PC-9 (cell line): ENCODE measurements at regions of chr6 and their contacts with region 1.

Region 1: GRCh38 chr6:31958741-31959739 is at the starts of genes NELFE and SKIC2:
- DNase-seq: peak; percentile 94 to 98
- H3K4me3 ChIP-seq: peak within 1 kb of the TSS; percentile 95
- H3K27ac ChIP-seq: 0 out of 2 replicates have a peak within 1 kb of the TSS, but pooled peaks have one; percentile 40
- H3K4me1 ChIP-seq: peaks cover 12% of the 10 kb centered on the region
- H3K27me3 ChIP-seq: no peaks in the 10 kb centered on the region
- CTCF ChIP-seq: no peak
- total RNA-seq, gene NELFE: 43.0 and 50.8 TPM in 2 replicates
- total RNA-seq, gene SKIC2: 67.9 and 86.0 TPM in 2 replicates

Region 2: DNA sequence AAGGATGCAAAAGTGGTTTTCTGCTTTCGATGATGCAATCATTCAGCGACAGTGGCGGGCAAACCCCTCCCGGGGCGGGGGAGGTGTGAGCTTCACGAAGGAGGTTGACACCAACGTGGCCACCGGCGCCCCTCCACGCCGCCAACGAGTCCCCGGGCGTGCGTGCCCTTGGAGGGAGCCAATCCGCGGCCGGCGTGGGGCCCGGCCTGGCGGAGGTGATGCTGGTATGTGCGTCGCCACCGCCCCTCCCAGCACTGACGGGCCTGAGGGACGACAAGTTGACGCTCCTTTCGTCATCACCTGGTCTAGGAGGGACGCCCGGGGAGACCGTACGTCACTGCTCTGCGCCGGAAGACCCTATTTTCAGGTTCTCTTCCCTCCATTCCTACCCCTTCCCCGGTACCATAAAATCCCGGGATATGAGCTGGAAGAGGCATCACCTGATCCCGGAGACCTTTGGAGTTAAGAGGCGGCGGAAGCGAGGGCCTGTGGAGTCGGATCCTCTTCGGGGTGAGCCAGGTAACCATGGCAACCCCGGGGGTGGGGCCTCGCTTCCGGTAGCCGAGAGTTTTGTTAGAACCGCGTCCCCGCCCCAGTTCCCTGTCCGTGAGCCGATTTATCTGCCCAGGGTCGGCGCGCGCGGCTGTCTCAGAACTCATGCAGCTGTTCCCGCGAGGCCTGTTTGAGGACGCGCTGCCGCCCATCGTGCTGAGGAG is 13.1 kb after region 1 on chr6 and contains the start of gene DXO:
- CTCF ChIA-PET with region 1: no interaction called
- POLR2A ChIA-PET with region 1: no interaction called
- intact Hi-C with region 1: loop called (anchors 1 kb)
- DNase-seq: peak; percentile 90 to 95
- H3K4me3 ChIP-seq: peak within 1 kb of the TSS; percentile 88
- H3K27ac ChIP-seq: peak within 1 kb of the TSS; percentile 86
- H3K4me1 ChIP-seq: peaks cover 15% of the 10 kb centered on the region
- H3K27me3 ChIP-seq: no peaks in the 10 kb centered on the region
- CTCF ChIP-seq: no peak
- total RNA-seq, gene DXO: 24.5 and 36.0 TPM in 2 replicates